ENCODE measurements at regions of chr1 and their contacts with region 1.

Region 1: DNA sequence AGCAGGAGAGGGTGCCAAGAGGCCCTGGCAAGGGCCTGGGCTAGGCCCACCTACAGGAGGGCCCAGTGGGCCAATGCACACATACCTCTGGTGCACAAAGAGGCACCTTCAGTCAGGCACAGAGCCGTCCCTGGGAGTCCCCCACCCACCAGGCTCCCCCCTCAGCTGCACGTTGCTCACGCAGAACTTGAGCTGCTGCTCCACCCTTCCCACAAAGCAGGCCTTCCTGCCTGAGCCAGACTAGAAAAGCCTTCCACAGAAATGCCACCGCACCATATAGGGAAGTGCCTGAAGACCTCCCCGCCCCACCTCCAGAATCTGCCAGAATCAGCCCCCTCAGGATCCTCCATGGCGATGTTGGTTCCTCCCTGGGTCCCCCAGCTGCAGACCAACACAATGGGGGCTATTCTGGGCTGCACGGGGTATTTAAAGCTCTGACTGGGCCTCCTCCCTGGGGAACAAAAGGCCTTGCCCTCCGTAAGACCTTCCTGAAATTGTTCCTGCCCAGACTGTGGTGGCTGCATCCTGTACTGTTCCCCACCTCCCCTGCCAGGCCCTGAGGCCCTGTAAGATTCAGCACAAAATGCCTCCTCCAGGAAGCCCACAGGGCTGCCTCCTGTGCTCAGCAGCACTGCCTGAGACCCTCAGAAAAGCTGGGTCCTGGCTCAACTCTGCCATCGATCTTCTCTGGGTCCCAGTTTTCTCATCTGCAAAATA is 27.2 kb downstream of the HSPG2 start:
- DNase-seq: peak; percentile 69 to 90
- H3K4me3 ChIP-seq: no peak overlapping the region
- H3K27ac ChIP-seq: peak overlapping the region; percentile 94 to 96
- H3K4me1 ChIP-seq: peaks cover 74 to 100% of the 10 kb centered on the region in 2 donors
- H3K27me3 ChIP-seq: no peaks in the 10 kb centered on the region
- CTCF ChIP-seq: peak in 1 of 3 experiments; percentile 11

Region 2: GRCh38 chr1:21261551-21262281 is 648.2 kb before region 1 on chr1:
- intact Hi-C with region 1: loop called (anchors 10 kb)
- DNase-seq: peak; percentile 78 to 96
- H3K4me3 ChIP-seq: peak overlapping the region in 1 of 2 donors; percentile 44
- H3K27ac ChIP-seq: peak overlapping the region; percentile 97 to 98
- H3K4me1 ChIP-seq: peaks cover 29 to 54% of the 10 kb centered on the region in 2 donors
- H3K27me3 ChIP-seq: no peaks in the 10 kb centered on the region
- CTCF ChIP-seq: no peak

Region 3: GRCh38 chr1:21926814-21927532 is 17.0 kb after region 1 on chr1:
- intact Hi-C with region 1: loop called (anchors 2 kb)
- DNase-seq: peak in 1 of 2 donors; percentile 92
- H3K4me3 ChIP-seq: peak overlapping the region in 1 of 2 donors; percentile 18
- H3K27ac ChIP-seq: peak overlapping the region; percentile 96 to 98
- H3K4me1 ChIP-seq: peaks cover 56 to 82% of the 10 kb centered on the region in 2 donors
- H3K27me3 ChIP-seq: no peaks in the 10 kb centered on the region
- CTCF ChIP-seq: no peak

Measured in ascending aorta (tissue), 2 donors.